Caco-2 (cell line): ENCODE measurements at regions of chr3 and their contacts with region 1.

Region 1: DNA sequence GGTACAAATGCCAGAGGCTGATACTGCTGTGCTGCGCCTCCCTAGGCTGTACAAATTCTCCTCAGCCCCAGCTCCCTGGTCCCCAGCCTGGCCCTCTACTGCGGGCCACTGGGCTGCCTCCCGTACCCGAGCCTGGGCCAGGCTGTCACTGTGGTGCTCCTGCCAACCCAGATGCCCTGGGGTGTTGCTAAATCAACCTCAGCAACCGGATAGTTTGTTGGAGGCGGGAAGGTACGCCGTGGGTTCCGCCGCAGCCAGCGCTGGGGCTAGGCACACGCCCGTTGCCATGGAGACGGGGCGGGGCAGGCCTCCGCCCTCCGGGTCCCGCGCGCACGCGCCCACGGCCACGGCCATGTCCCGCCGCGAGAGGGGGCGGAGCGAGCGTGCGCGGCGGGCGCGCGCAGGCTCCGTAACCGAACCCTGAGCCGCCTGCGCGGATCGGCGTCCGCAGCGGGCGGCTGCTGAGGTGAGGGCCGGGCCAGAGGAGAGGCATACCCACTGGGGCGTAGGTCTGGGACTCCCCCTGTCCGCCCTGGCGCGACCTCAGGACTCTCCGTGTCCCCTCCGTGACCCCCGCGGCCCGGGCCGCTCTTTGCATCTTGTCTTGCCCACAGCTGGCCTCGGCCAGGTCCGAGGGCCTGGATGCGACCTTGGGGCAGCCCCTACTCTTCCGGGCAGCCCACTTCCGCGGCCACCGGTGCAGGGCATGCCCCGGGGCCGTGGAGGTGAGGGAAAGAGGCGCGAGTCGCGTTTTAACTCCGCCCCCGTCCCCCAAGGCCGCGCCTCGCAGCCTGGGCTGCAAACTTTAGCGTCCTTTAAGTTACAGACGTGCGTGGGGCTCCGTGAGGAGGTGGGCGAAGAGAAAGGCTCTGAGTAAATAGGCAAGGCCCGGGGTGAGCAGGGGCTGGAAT is at the start of gene TEX264:
- DNase-seq: peak; percentile 70 to 81
- H3K4me3 ChIP-seq: peak within 1 kb of the TSS; percentile 70
- H3K4me3 Mint-ChIP-seq: peak within 1 kb of the TSS; percentile 94
- H3K27ac Mint-ChIP-seq: peak within 1 kb of the TSS; percentile 88
- H3K4me1 ChIP-seq: no peaks in the 10 kb centered on the region
- H3K4me1 Mint-ChIP-seq: peaks cover 32% of the 10 kb centered on the region
- H3K27me3 ChIP-seq: no peaks in the 10 kb centered on the region
- H3K27me3 Mint-ChIP-seq: no peaks in the 10 kb centered on the region
- CTCF ChIP-seq: no peak
- total RNA-seq, gene TEX264: 32.4 and 37.9 TPM in 2 replicates

Region 2: GRCh38 chr3:51544011-51544775 is 126.9 kb before region 1 on chr3:
- CTCF ChIA-PET with region 1: no interaction called
- POLR2A ChIA-PET with region 1: no interaction called
- intact Hi-C with region 1: no loop called
- DNase-seq: no peak
- H3K4me3 ChIP-seq: no peak overlapping the region
- H3K4me3 Mint-ChIP-seq: no peak overlapping the region
- H3K27ac Mint-ChIP-seq: no peak overlapping the region
- H3K4me1 ChIP-seq: no peaks in the 10 kb centered on the region; the same call in 1 of the 2 replicates
- H3K4me1 Mint-ChIP-seq: peaks cover 17% of the 10 kb centered on the region
- H3K27me3 ChIP-seq: no peaks in the 10 kb centered on the region
- H3K27me3 Mint-ChIP-seq: no peaks in the 10 kb centered on the region
- CTCF ChIP-seq: no peak

Region 3: DNA sequence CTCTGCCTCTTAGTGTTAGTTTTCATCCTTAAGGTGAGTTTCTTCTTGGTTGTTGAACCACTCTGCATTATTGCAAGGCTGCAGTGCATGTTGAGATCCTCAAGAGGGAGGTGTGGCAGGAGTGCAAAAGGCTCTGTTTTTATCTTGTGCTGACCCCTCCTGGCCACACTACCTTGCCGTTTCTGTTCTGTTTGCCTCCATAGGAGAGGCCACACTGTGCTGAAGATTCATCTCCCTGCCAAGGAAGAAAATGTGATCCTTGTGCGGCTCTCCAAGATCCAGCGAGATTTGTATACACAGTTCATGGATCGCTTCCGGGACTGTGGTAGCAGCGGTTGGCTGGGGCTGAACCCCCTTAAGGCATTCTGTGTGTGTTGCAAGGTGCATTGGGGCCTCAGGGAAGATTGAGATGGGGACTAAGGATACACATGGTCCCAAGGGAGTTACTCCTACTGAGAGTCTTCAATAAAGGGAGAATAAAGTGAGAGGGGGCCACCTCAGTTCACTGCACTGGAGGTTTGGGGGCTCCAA is 33.1 kb before region 1 on chr3:
- CTCF ChIA-PET with region 1: interaction called, 12 read pairs
- POLR2A ChIA-PET with region 1: no interaction called
- intact Hi-C with region 1: loop called (anchors 1 kb)
- DNase-seq: peak; percentile 73 to 75
- H3K4me3 ChIP-seq: no peak overlapping the region
- H3K4me3 Mint-ChIP-seq: no peak overlapping the region
- H3K27ac Mint-ChIP-seq: no peak overlapping the region
- H3K4me1 ChIP-seq: peaks cover 10% of the 10 kb centered on the region
- H3K4me1 Mint-ChIP-seq: no peaks in the 10 kb centered on the region
- H3K27me3 ChIP-seq: no peaks in the 10 kb centered on the region
- H3K27me3 Mint-ChIP-seq: no peaks in the 10 kb centered on the region
- CTCF ChIP-seq: peak; percentile 96 to 98